Activated T-helper 2 cell treated with anti-CD3 and anti-CD28 coated beads, Interferon-gamma antibody, Interleukin-2, Interleukin-4, amounts not matched to agents 10 μg/mL and 5 μg/mL and 100 μg/mL, durations not matched to agents 14 hours and 24 hours and 36 hours (primary cell): ENCODE measurements at regions of chr3 and their contacts with region 1.

Region 1: DNA sequence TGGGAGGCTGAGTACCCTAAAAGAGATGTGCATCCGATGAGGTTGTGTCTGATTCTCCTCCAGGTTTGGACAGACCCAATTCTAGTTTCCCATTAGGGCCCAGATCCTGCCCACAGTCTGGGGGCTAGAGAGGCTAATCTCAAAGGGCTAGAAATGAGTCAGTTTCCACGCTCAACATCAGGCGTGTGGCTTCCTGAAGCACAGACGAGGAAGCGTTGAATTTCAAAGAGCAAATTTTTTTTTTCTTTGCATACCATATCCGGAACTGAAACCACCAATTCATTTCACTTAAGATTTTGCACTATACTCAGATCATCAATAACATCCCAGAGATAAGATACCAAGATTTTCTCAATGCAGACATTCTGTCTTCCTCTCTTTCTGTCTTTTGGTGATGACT is 173.8 kb upstream of the BCL6 start:
- DNase-seq: peak; percentile 71
- H3K4me3 Mint-ChIP-seq: peak overlapping the region; percentile 63
- H3K27ac Mint-ChIP-seq: peak overlapping the region; percentile 90
- H3K4me1 Mint-ChIP-seq: peaks cover 72% of the 10 kb centered on the region
- H3K27me3 Mint-ChIP-seq: peaks cover 3% of the 10 kb centered on the region

Region 2: DNA sequence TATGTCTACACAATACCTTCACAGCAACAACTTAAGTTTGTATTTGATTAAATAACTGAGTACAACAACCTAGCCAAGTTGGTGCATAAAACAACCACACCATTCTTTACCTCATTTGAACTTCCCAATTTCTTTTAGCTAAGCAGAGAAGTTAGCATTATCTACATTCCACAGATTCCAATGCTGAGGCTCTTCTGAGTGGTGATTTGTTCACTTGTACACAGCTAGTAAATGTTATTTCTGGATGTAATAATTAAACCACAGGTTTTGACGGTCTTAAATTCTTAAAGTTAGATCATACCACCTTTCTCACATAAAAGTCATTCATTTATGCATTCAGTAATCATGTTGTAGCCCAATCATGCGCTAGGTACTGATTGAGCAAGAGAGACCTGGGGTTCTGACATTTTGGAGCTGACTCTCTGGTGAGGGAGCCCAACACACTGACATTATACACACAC is 351.4 kb before region 1 on chr3:
- intact Hi-C with region 1: no loop called
- DNase-seq: no peak
- H3K4me3 Mint-ChIP-seq: no peak overlapping the region
- H3K27ac Mint-ChIP-seq: no peak overlapping the region
- H3K4me1 Mint-ChIP-seq: no peaks in the 10 kb centered on the region
- H3K27me3 Mint-ChIP-seq: peaks cover 28% of the 10 kb centered on the region

Region 3: GRCh38 chr3:187738331-187739093 is 180.5 kb before region 1 on chr3:
- intact Hi-C with region 1: loop called (anchors 1 kb)
- DNase-seq: peak; percentile 69
- H3K4me3 Mint-ChIP-seq: peak overlapping the region; percentile 94
- H3K27ac Mint-ChIP-seq: peak overlapping the region; percentile 70
- H3K4me1 Mint-ChIP-seq: peaks cover 38% of the 10 kb centered on the region
- H3K27me3 Mint-ChIP-seq: peaks cover 12% of the 10 kb centered on the region

Region 4: DNA sequence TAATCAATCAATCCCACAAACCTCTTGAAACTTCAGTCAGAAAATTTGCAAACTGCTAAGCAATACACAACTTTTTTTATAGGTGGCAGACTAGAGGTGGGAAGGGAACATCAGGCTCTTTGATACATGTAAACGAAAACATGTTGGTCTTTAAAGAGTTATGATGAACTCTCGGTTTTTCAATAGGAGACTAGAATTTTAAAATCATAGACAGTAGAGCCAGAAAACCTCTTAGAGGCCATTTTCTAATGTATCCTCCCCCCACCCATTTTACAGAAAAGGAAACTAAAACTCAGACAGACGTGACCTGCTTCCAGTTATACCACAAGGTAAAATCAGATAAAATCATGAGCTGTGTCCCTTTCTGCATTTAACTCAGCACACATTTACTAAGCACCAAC is 55.8 kb after region 1 on chr3:
- intact Hi-C with region 1: loop called (anchors 1 kb)
- DNase-seq: peak; percentile 20
- H3K4me3 Mint-ChIP-seq: peak overlapping the region; percentile 72
- H3K27ac Mint-ChIP-seq: peak overlapping the region; percentile 93
- H3K4me1 Mint-ChIP-seq: peaks cover 68% of the 10 kb centered on the region
- H3K27me3 Mint-ChIP-seq: no peaks in the 10 kb centered on the region

Region 5: DNA sequence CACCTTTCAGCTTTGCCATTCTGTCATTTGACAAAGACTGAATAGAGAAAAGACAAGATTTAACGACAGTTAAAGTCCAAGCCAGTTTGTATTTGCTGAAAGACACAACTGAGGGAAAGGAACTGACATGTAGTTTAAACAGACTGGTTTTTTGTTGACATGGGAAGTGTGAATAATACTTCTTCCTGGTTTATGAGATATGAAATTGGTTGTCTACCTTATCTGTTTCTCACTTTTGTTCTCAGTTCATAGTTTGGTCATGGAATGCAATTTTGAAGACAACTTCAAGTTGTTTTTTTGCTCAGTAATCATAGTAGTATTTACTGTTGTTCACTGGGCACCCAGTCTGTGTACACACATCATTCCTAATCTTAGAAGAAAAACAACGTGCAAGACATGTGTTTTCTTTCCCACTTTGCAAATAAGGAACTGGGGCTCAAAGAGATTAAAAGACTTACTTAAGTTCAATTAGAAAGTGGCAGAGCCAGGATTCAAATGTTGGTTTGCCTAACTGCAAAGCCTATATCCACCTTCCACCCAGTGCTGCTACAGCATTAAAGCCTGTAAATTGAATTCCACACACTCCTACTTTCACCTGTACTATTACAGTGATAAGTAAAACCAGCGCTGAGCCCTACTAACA is 338.5 kb after region 1 on chr3:
- intact Hi-C with region 1: loop called (anchors 1 kb)
- DNase-seq: no peak
- H3K4me3 Mint-ChIP-seq: no peak overlapping the region
- H3K27ac Mint-ChIP-seq: peak overlapping the region; percentile 70
- H3K4me1 Mint-ChIP-seq: peaks cover 57% of the 10 kb centered on the region
- H3K27me3 Mint-ChIP-seq: no peaks in the 10 kb centered on the region

Region 6: DNA sequence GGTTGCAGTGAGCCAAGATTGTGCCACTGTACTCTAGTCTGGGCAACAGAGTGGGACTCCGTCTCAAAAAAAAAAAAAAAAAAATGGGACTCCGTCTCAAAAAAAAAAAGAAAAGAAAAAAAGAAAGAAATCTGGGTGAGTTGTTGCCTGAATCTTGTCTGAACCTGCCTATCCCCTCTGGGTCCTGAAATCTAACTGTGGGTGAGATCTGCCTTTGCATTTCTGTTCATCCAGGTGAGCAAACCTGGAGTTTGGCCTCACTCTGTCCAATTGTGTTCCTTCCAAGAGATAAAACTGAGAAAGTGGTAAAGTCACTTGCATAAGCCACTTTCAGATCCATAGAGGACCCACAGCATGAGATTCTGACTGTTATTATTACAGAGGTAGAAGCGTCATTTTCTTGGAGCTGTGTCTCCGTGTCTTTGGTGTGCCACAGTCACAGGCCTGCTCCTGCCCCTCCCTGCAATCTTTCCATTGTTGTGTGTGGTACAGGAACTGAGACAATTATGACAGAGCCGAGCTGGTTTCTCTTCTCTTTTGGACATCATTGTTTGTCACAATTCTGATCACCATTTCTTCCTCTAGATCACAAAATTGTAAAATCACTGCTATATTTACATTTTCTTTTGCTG is 470.8 kb after region 1 on chr3:
- intact Hi-C with region 1: loop called (anchors 2 kb)
- DNase-seq: peak; percentile 30
- H3K4me3 Mint-ChIP-seq: no peak overlapping the region
- H3K27ac Mint-ChIP-seq: peak overlapping the region; percentile 75
- H3K4me1 Mint-ChIP-seq: peaks cover 33% of the 10 kb centered on the region
- H3K27me3 Mint-ChIP-seq: no peaks in the 10 kb centered on the region

Region 7: DNA sequence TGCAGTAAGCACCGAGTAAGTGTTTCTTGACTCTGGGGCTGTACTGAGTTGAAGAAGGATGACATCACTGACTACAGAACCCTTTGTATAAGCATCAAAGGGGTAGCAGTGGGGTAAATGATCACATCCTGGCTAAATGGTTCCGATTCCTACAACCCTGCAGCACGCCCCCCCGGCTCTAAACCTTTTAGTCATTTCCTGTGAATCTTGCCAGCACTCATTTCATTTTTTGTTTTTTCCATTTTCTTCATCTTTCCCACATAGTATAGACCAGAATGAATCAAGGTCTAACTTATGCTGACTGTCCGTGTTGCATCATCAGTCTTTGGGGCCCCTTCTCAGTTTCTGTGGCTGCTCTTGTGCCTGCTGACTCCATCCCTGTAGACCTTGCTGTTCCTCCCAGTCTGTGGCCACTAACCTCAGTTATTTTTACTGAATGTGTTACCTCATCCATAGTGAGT is 869.6 kb after region 1 on chr3:
- intact Hi-C with region 1: loop called (anchors 1 kb)
- DNase-seq: peak; percentile 42
- H3K4me3 Mint-ChIP-seq: no peak overlapping the region
- H3K27ac Mint-ChIP-seq: no peak overlapping the region
- H3K4me1 Mint-ChIP-seq: peaks cover 2% of the 10 kb centered on the region
- H3K27me3 Mint-ChIP-seq: no peaks in the 10 kb centered on the region

Region 8: GRCh38 chr3:189304446-189305351 is 1385.7 kb after region 1 on chr3:
- intact Hi-C with region 1: loop called (anchors 10 kb)
- DNase-seq: no peak
- H3K4me3 Mint-ChIP-seq: peak overlapping the region; percentile 71
- H3K27ac Mint-ChIP-seq: peak overlapping the region; percentile 98
- H3K4me1 Mint-ChIP-seq: peaks cover 75% of the 10 kb centered on the region
- H3K27me3 Mint-ChIP-seq: no peaks in the 10 kb centered on the region